ENCODE measurements at regions of chr12 and their contacts with region 1.

Region 1: DNA sequence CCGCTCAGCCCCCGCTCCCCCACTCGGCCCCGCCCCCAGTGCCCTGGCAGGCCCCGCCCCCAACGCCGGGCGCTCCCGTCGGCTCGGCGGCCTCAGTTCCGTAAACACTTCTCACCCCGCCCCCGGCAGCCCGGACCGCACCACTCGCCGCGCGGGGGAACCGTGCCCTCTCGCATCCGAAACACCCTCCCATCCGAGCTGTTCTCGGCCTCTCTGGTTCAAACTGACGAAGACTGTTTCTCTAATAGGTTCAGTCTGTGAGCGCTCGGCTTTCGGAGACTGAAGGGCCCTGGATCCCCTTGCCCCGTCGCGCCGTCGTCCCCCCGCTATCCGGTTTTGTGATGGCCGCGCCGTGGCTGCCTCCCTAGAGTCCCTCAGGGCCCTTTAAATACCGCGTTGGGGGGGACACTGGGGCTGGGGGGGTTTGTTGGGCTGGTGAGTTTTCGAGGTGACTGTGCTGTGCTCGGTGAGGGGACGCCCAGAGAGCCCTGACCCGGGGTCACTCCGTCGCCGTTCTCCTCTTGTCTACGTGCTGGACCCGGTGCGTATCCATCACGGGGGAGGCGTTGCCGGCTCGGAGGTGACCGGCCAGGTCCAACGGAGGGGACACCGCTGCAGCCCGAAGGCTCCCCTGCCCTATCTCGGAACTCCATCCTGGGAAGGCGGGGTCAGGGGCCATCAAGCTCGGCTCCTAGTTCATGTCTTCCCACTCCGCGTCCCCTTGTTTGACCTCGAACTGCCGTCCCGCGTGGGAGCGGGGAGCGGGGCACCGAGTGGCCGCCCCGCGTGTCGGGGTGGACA is at the start of gene TCP11L2:
- DNase-seq: peak; percentile 94
- H3K4me3 Mint-ChIP-seq: peak within 1 kb of the TSS; percentile 85
- H3K27ac Mint-ChIP-seq: peak within 1 kb of the TSS; percentile 99
- H3K4me1 Mint-ChIP-seq: peaks cover 60% of the 10 kb centered on the region
- H3K27me3 Mint-ChIP-seq: no peaks in the 10 kb centered on the region
- CTCF ChIP-seq: no peak
- total RNA-seq, gene TCP11L2: 30.7 and 37.7 TPM in 2 replicates

Region 2: GRCh38 chr12:106267535-106267934 is 35.1 kb before region 1 on chr12:
- CTCF ChIA-PET with region 1: no interaction called
- intact Hi-C with region 1: no loop called
- DNase-seq: no peak
- H3K4me3 Mint-ChIP-seq: no peak overlapping the region
- H3K27ac Mint-ChIP-seq: no peak overlapping the region
- H3K4me1 Mint-ChIP-seq: no peaks in the 10 kb centered on the region
- H3K27me3 Mint-ChIP-seq: no peaks in the 10 kb centered on the region
- CTCF ChIP-seq: no peak

Region 3: GRCh38 chr12:106357549-106358395 is 55.2 kb after region 1 on chr12 and contains the start of gene POLR3B:
- CTCF ChIA-PET with region 1: interaction called, 12 read pairs
- intact Hi-C with region 1: no loop called
- DNase-seq: peak; percentile 97
- H3K4me3 Mint-ChIP-seq: peak within 1 kb of the TSS; percentile 84
- H3K27ac Mint-ChIP-seq: peak within 1 kb of the TSS; percentile 97
- H3K4me1 Mint-ChIP-seq: peaks cover 17% of the 10 kb centered on the region
- H3K27me3 Mint-ChIP-seq: no peaks in the 10 kb centered on the region
- CTCF ChIP-seq: peak; percentile 83
- total RNA-seq, gene POLR3B: 13.6 and 13.9 TPM in 2 replicates

Measured in Calu3 (cell line).